Caco-2 (cell line): ENCODE measurements at regions of chr17 and their contacts with region 1.

Region 1: DNA sequence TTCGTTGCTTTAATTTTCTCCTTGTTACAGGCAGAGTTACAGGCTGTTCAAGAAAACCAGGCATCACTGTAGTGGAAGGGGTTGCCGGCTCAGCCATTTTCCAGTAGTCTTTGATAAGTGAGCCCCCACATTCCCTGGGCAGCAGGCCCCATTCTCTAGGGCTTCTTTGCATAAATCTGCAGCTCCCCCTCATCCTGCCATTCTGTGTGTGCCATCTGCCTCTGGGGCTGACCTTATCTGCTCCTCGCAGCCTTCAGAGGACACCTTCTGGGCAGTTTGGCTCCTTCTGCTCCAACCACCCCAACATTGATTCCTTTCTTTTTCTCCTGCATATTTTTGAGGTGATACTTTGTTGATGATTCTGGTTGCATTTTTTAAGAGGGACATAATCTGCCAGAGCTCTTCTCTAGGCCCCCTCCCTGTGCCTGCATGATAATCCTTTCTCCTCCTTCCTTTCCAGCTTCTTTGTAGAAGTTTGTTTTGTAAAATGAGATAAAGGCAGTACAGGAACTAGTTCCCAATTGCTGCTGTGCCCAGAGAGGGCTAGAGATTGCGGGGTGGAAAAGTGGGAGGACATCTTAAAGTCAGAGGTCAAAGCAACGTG is 17.1 kb downstream of the RND2 start:
- DNase-seq: no peak
- H3K4me3 ChIP-seq: no peak overlapping the region
- H3K4me3 Mint-ChIP-seq: no peak overlapping the region
- H3K27ac Mint-ChIP-seq: peak overlapping the region; percentile 62
- H3K4me1 ChIP-seq: no peaks in the 10 kb centered on the region
- H3K4me1 Mint-ChIP-seq: no peaks in the 10 kb centered on the region
- H3K27me3 ChIP-seq: no peaks in the 10 kb centered on the region
- H3K27me3 Mint-ChIP-seq: no peaks in the 10 kb centered on the region
- CTCF ChIP-seq: no peak

Region 2: DNA sequence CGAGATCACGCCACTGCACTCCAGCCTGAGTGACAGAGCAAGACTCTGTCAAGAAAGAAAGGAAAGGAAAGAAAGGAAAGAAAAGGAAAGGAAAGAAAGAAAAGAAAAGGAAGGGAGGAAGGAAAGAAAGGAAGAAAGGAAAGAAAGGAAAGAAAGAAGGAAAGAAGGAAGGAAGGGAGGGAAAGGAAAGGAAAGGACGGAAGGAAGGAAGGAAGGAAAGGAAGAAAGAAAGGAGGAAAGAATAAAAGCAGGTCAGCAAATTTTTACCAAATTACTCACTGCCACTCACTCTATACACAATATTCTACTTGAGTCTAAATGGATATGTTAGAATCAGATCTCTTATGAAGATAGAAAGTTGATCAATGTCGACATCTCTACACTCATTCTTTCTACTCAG is 32.7 kb after region 1 on chr17:
- CTCF ChIA-PET with region 1: interaction called, 10 read pairs
- POLR2A ChIA-PET with region 1: no interaction called
- intact Hi-C with region 1: no loop called
- DNase-seq: no peak
- H3K4me3 ChIP-seq: no peak overlapping the region
- H3K4me3 Mint-ChIP-seq: no peak overlapping the region
- H3K27ac Mint-ChIP-seq: no peak overlapping the region
- H3K4me1 ChIP-seq: peaks cover 8% of the 10 kb centered on the region
- H3K4me1 Mint-ChIP-seq: peaks cover 2% of the 10 kb centered on the region
- H3K27me3 ChIP-seq: no peaks in the 10 kb centered on the region
- H3K27me3 Mint-ChIP-seq: no peaks in the 10 kb centered on the region
- CTCF ChIP-seq: no peak

Region 3: GRCh38 chr17:43106552-43106951 is 64.4 kb after region 1 on chr17:
- CTCF ChIA-PET with region 1: no interaction called
- POLR2A ChIA-PET with region 1: no interaction called
- intact Hi-C with region 1: no loop called
- DNase-seq: no peak
- H3K4me3 ChIP-seq: no peak overlapping the region
- H3K4me3 Mint-ChIP-seq: no peak overlapping the region
- H3K27ac Mint-ChIP-seq: no peak overlapping the region
- H3K4me1 ChIP-seq: no peaks in the 10 kb centered on the region
- H3K4me1 Mint-ChIP-seq: no peaks in the 10 kb centered on the region
- H3K27me3 ChIP-seq: no peaks in the 10 kb centered on the region
- H3K27me3 Mint-ChIP-seq: no peaks in the 10 kb centered on the region
- CTCF ChIP-seq: no peak